OCI-LY7 (cell line): ENCODE measurements at regions of chr5 and their contacts with region 1.

Region 1: DNA sequence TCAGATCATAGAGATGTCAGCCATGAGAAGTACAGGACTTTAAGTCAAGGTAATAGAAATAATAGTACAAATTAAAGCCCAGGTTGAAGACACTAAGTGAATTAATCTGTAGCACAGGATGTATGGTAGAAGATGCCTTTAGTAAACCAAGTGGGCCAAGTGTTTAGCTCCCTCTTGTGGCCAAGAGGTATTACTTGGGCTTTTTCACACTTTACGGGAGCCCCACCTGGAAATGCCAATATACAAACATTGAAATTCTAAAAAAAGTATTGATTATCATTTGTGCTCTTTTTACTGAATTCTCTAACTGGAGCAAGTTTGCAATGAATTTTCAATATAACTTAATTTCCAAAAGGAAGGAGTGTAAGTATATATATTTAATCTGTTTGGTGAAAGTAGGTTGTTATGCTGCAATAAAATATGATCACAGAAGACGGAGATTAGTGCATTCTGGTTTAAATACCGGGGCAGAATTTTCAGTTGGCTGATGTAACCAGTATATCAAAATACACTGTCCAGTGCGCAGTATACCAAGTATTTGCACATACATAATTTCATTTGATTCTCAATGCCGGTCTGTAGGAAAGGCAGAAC is 84.7 kb downstream of the PARP8 start:
- DNase-seq: peak; percentile 83
- H3K4me3 ChIP-seq: no peak overlapping the region
- H3K27ac ChIP-seq: no peak overlapping the region
- H3K4me1 ChIP-seq: peaks cover 25% of the 10 kb centered on the region
- CTCF ChIP-seq: peak; percentile 99

Region 2: GRCh38 chr5:50302815-50303490 is 448.2 kb before region 1 on chr5:
- CTCF ChIA-PET with region 1: no interaction called
- POLR2A ChIA-PET with region 1: no interaction called
- intact Hi-C with region 1: loop called (anchors 5 kb)
- DNase-seq: no peak
- H3K4me3 ChIP-seq: no peak overlapping the region
- H3K27ac ChIP-seq: peak overlapping the region; percentile 3
- H3K4me1 ChIP-seq: peaks cover 57% of the 10 kb centered on the region
- CTCF ChIP-seq: no peak

Region 3: GRCh38 chr5:50697421-50698138 is 53.6 kb before region 1 on chr5:
- CTCF ChIA-PET with region 1: no interaction called
- POLR2A ChIA-PET with region 1: no interaction called
- intact Hi-C with region 1: no loop called
- DNase-seq: no peak
- H3K4me3 ChIP-seq: no peak overlapping the region
- H3K27ac ChIP-seq: no peak overlapping the region
- H3K4me1 ChIP-seq: peaks cover 6% of the 10 kb centered on the region
- CTCF ChIP-seq: no peak